Heart left ventricle (tissue), 16 donors: ENCODE measurements at regions of chr7 and their contacts with region 1.

Region 1: DNA sequence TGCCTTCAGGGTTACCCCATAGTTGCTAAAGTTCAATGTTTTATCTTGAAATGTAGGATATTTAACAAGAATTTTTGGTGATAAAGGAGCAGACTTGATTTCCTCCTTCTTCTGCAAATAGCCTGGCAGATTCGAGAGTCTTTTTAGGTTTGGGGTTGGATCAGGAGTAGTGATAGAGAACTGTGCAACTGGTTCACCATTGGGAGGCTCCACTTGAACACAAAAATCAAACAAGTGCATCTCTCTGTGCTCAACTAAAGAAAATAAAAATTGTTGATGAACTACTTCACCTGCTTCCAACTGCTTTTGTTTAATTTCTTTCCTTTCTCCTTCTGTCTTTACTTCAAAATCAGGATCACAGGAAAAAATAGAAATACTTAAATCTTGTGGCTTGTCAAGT is 58.5 kb downstream of the MACC1 start:
- DNase-seq: no peak
- ATAC-seq: peak in 3 of 4 donors; percentile 54 to 81 (median 75)
- H3K4me3 ChIP-seq: no peak overlapping the region
- H3K27ac ChIP-seq: no peak overlapping the region
- H3K4me1 ChIP-seq: peaks cover 0 to under 1% (median 0%) of the 10 kb centered on the region in 12 donors
- H3K27me3 ChIP-seq: no peaks in the 10 kb centered on the region
- CTCF ChIP-seq: peak in 10 of 12 donors; percentile 29 to 60 (median 48)
- POLR2A ChIP-seq: no peak

Region 2: GRCh38 chr7:19747740-19748339 is 410.8 kb before region 1 on chr7:
- intact Hi-C with region 1: loop called in 2 of 10 experiments (anchors 5 to 10 kb)
- DNase-seq: no peak
- ATAC-seq: no peak
- H3K4me3 ChIP-seq: no peak overlapping the region
- H3K27ac ChIP-seq: no peak overlapping the region
- H3K4me1 ChIP-seq: no peaks in the 10 kb centered on the region
- H3K27me3 ChIP-seq: peaks cover 0 to 10% (median 0%) of the 10 kb centered on the region in 9 donors
- CTCF ChIP-seq: peak in 11 of 12 donors; percentile 24 to 62 (median 44)
- POLR2A ChIP-seq: no peak

Region 3: DNA sequence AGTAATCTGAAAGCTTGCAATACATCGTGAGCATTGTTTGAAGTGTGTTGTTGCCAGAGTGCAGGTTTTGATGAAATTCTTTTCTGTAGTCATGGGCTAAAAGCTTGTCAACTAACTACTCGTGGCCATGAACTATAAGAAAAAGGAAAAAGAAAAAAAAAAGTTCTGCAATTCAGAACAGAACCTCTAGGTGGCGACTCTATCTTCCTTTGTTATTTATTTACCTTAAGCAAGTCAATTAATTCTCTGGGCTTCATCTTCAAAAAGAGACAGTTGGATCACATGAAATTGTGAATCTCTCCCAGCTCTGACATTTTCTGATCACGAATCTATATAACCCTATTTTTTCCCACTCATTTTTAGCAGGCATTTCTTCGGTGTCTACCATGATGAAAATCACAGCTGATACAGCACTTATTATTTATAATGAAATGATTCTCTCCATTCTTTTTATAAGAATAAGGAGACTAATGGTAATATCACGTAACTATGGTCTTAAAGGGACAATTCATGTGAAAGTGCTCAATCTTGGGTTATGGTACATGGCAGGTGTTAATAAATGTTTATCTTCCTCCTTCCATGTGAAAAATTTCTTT is 404.1 kb before region 1 on chr7:
- intact Hi-C with region 1: loop called in 2 of 10 experiments (anchors 5 to 10 kb)
- DNase-seq: no peak
- ATAC-seq: no peak
- H3K4me3 ChIP-seq: no peak overlapping the region
- H3K27ac ChIP-seq: no peak overlapping the region
- H3K4me1 ChIP-seq: no peaks in the 10 kb centered on the region
- H3K27me3 ChIP-seq: peaks cover 0 to 9% (median 0%) of the 10 kb centered on the region in 9 donors
- CTCF ChIP-seq: peak; percentile 36 to 74 (median 68)
- POLR2A ChIP-seq: no peak

Region 4: DNA sequence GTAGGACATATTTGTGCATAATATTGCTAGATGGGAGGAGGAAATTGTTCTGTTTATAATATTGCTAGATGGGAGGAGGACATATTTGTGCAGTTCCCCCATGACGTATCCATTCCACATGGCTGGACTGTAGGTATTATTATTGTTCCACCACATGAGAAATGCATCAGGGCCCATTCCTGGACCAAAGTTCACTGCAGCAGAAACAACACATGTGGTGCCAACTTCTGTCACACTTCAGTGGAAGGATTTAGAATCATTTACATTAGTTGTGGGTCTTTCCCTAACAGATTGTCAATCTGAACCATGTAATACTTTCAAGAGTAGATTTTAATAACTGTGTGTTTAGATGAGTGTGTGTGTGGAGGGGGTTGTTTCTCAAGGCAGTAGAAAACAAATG is 91.2 kb after region 1 on chr7:
- intact Hi-C with region 1: no loop called
- DNase-seq: no peak
- ATAC-seq: no peak
- H3K4me3 ChIP-seq: no peak overlapping the region
- H3K27ac ChIP-seq: no peak overlapping the region
- H3K4me1 ChIP-seq: peaks cover 0 to under 1% (median 0%) of the 10 kb centered on the region in 12 donors
- H3K27me3 ChIP-seq: no peaks in the 10 kb centered on the region
- CTCF ChIP-seq: no peak
- POLR2A ChIP-seq: no peak

Region 5: GRCh38 chr7:20310963-20311742 is 152.5 kb after region 1 on chr7:
- intact Hi-C with region 1: loop called in 6 of 10 experiments (anchors 5 to 10 kb)
- DNase-seq: no peak
- ATAC-seq: no peak
- H3K4me3 ChIP-seq: no peak overlapping the region
- H3K27ac ChIP-seq: no peak overlapping the region
- H3K4me1 ChIP-seq: peaks cover 0 to 4% (median 0%) of the 10 kb centered on the region in 12 donors
- H3K27me3 ChIP-seq: no peaks in the 10 kb centered on the region
- CTCF ChIP-seq: peak in 9 of 12 donors; percentile 17 to 48 (median 31)
- POLR2A ChIP-seq: no peak